Activated CD4-positive, alpha-beta memory T cell treated with anti-CD3 and anti-CD28 coated beads, Interleukin-2, amount 10 ng/mL, durations not matched to agents 7 days and 5 days (primary cell): ENCODE measurements at regions of chr15 and their contacts with region 1.

Region 1: GRCh38 chr15:77186594-77187011 is 115.7 kb upstream of the TSPAN3 start:
- DNase-seq: no peak
- H3K4me3 Mint-ChIP-seq: no peak overlapping the region
- H3K27ac Mint-ChIP-seq: no peak overlapping the region
- H3K4me1 Mint-ChIP-seq: peaks cover 39% of the 10 kb centered on the region
- H3K27me3 Mint-ChIP-seq: no peaks in the 10 kb centered on the region

Region 2: GRCh38 chr15:76973362-76973743 is 213.2 kb before region 1 on chr15:
- CTCF ChIA-PET with region 1: interaction called, 12 read pairs
- POLR2A ChIA-PET with region 1: no interaction called
- DNase-seq: peak; percentile 71
- H3K4me3 Mint-ChIP-seq: no peak overlapping the region
- H3K27ac Mint-ChIP-seq: no peak overlapping the region
- H3K4me1 Mint-ChIP-seq: peaks cover 25% of the 10 kb centered on the region
- H3K27me3 Mint-ChIP-seq: peaks cover 1% of the 10 kb centered on the region

Region 3: GRCh38 chr15:77496710-77497103 is 310.1 kb after region 1 on chr15:
- CTCF ChIA-PET with region 1: interaction called, 27 read pairs
- POLR2A ChIA-PET with region 1: no interaction called
- DNase-seq: peak; percentile 71
- H3K4me3 Mint-ChIP-seq: no peak overlapping the region
- H3K27ac Mint-ChIP-seq: no peak overlapping the region
- H3K4me1 Mint-ChIP-seq: peaks cover 17% of the 10 kb centered on the region
- H3K27me3 Mint-ChIP-seq: no peaks in the 10 kb centered on the region

Region 4: DNA sequence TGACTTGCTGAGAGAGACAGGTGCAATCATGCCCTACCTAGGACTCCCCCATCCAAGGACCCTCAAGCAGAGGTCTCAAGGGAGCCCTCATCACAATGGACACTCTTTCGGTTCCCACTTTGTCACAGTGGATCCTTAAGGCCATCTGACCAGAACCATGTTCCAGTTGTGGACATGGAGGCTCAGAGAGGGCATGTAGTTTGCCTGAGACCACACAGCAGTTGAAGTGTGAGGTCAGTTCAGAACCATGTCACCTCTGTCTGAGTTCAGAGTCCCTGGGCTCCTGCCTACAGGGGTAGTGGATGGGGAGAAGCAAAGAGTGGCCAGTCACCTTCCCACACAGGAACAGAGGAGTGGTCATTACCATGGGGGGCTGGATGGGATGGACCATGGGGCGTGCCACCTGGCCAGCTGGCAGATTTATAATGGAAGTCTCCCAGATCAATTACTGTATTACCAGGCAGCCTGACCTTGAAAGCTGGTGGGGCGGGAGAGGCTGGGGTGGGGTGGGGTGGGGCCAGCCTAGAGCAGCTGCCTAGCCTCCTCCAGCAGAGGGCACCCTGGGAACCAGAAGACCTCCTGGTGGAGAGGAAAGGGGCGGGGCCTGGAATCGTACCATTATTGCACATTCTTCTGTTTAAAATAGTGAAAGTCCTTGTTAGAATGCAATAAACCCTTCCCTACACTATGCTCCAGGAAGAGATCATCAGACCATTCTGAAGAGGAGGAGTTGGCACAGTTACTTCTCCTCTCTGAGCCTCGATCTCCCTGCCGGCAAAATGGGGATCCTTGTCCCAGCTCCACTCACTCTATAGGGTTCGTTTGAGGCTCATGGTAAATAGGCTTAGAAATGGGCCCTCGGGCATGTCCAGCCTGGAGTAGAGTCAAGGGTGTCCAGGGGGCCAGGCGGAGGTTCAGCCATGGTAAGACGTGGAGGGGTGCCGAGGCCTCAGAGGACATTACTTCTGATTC is 473.0 kb after region 1 on chr15:
- CTCF ChIA-PET with region 1: no interaction called
- POLR2A ChIA-PET with region 1: no interaction called
- DNase-seq: peak; percentile 33
- H3K4me3 Mint-ChIP-seq: no peak overlapping the region
- H3K27ac Mint-ChIP-seq: no peak overlapping the region
- H3K4me1 Mint-ChIP-seq: no peaks in the 10 kb centered on the region
- H3K27me3 Mint-ChIP-seq: peaks cover 7% of the 10 kb centered on the region